ENCODE measurements at regions of chr1 and their contacts with region 1.

Region 1: DNA sequence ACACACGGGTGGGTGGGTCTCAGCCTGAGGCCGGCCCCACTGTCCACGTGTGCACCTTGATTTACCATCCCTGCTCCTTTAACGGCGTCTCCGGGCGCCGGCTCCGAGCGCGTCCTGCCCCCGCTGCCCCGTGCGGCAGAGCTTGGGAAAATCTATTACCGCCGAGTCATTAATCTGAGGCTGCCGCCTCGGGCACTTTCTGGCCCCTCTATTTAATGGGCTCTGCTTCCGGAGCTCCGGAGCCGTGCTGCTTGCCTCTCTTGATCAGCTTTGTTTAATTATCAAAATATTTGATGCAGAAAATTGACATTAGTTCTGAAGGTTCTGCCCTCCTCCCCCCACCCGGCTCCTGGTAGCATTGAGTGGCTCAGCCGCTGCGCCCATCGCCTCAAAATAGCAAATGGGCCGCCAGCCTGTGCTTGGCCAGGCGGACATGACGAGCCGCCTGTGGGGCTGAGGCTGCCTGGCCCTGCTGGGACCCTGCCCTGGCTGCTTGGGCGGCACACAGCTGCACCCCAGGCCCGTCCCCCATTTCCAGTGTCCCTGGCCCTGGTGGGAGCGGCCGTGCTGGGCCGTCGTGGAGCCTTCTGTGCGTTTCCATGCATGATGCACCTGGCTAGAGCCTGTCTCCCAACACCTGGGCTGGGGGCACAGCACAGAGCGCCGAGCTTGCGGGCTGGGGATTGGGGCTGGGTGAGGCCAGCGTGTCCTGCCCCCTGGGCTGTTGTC is 81.6 kb upstream of the TTC34 start:
- DNase-seq: no peak
- H3K4me3 ChIP-seq: no peak overlapping the region
- H3K27ac ChIP-seq: no peak overlapping the region
- H3K4me1 ChIP-seq: no peaks in the 10 kb centered on the region
- H3K27me3 ChIP-seq: no peaks in the 10 kb centered on the region
- CTCF ChIP-seq: no peak

Region 2: GRCh38 chr1:2611621-2612344 is 271.3 kb before region 1 on chr1:
- CTCF ChIA-PET with region 1: no interaction called
- dilution Hi-C with region 1: no loop called
- in situ Hi-C with region 1: no loop called
- intact Hi-C with region 1: no loop called
- DNase-seq: no peak
- H3K4me3 ChIP-seq: no peak overlapping the region
- H3K27ac ChIP-seq: no peak overlapping the region
- H3K4me1 ChIP-seq: no peaks in the 10 kb centered on the region
- H3K27me3 ChIP-seq: peaks cover 6% of the 10 kb centered on the region
- CTCF ChIP-seq: no peak

Region 3: DNA sequence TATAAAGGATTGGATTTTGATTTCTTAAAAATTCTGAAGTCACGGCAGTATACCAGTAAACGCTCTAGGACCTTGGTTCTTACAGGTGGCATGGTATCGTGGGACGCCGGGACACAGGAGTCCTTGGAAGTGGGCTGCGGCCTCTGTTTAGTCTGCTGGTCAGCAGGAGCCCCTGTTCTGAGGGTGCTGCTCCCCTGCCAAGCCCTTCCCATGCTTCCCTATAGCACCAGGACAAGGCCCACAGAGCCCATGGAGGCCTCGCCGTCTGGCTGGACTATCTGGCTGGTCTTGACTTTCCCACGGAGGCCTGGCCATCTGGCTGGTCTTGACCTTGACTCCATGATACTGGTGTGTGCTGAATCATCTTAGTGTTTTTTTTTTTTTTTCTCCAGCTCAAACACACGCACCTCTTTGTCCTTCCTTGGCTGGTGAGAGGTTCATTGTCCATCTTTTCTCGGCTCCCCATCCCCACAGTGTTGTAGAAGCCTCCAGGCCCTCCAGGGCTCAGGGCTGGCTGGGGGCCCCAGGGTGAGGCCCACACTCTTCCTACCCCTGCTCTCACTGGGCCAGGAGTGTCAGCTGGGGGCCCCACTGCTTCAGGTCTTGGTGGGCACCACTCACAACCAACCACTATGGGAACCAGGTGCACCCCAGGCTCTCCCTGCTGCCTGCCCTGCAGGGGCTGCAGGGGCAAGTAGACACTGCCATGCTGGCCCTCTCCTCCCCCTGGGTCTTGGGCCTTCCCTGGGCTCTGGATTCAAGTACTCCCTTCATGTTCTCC is 65.2 kb before region 1 on chr1:
- CTCF ChIA-PET with region 1: no interaction called
- dilution Hi-C with region 1: loop called (anchors 5 kb)
- in situ Hi-C with region 1: no loop called
- intact Hi-C with region 1: no loop called
- DNase-seq: no peak
- H3K4me3 ChIP-seq: no peak overlapping the region
- H3K27ac ChIP-seq: no peak overlapping the region
- H3K4me1 ChIP-seq: no peaks in the 10 kb centered on the region
- H3K27me3 ChIP-seq: no peaks in the 10 kb centered on the region
- CTCF ChIP-seq: no peak

Region 4: DNA sequence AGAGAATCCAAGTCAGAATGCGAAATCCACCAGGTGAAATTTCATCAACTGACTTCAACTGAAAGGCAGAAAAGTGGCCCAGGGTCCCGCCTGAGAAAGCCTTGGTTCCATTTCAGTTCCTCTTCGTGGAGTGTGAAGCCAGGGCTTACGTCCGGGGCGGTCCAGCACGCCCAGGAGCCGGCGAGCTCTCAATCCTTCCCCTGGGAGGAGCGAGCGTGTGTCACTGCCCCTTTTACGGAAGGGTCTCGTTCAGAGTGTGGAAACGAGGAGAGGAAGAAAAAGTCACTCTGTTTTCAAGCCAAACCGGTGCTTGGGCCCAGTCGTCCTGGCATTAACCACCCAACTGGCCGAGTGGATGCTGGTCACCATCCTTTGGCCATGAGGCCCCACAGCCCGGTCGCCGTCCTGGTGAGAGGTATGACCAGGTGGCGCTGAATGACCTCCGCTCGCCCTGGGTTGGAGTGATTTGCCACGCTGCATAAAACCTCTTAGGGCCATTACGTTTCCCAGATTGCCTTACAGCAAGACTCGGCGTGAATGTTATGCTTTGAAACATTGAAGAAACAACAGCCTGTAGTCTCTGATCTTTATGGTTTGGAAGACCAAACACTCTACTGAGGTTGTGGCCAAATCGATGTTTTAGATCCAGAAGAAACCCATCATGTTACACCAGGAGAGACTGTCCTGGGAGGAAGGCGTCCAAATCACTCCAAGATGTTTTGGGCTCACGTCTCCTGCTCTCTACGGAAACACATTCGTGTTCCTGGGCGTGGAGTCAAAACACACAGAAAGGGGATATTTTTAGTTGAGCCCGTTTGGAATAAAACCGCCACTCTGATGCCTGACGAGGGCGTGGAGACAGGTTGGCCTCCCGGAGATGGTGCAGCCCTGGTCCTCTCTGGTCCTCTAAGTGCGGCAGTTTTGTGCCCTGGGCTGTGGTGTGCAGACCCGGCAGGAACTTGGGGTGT is 44.5 kb after region 1 on chr1:
- CTCF ChIA-PET with region 1: no interaction called
- dilution Hi-C with region 1: loop called (anchors 5 kb)
- in situ Hi-C with region 1: no loop called
- intact Hi-C with region 1: no loop called
- DNase-seq: no peak
- H3K4me3 ChIP-seq: no peak overlapping the region
- H3K27ac ChIP-seq: no peak overlapping the region
- H3K4me1 ChIP-seq: no peaks in the 10 kb centered on the region
- H3K27me3 ChIP-seq: no peaks in the 10 kb centered on the region
- CTCF ChIP-seq: no peak

Region 5: GRCh38 chr1:2943686-2944260 is 60.6 kb after region 1 on chr1:
- CTCF ChIA-PET with region 1: no interaction called
- dilution Hi-C with region 1: no loop called
- in situ Hi-C with region 1: no loop called
- intact Hi-C with region 1: no loop called
- DNase-seq: no peak
- H3K4me3 ChIP-seq: no peak overlapping the region
- H3K27ac ChIP-seq: no peak overlapping the region
- H3K4me1 ChIP-seq: no peaks in the 10 kb centered on the region
- H3K27me3 ChIP-seq: no peaks in the 10 kb centered on the region
- CTCF ChIP-seq: no peak

Region 6: GRCh38 chr1:3069491-3070303 is 186.6 kb after region 1 on chr1:
- CTCF ChIA-PET with region 1: no interaction called
- dilution Hi-C with region 1: loop called (anchors 5 kb)
- in situ Hi-C with region 1: no loop called
- intact Hi-C with region 1: no loop called
- DNase-seq: peak; percentile 11
- H3K4me3 ChIP-seq: peak overlapping the region in 2 of 3 experiments; percentile 41 to 51
- H3K27ac ChIP-seq: no peak overlapping the region
- H3K4me1 ChIP-seq: peaks cover 2% of the 10 kb centered on the region
- H3K27me3 ChIP-seq: peaks cover 36% of the 10 kb centered on the region
- CTCF ChIP-seq: no peak

Region 7: DNA sequence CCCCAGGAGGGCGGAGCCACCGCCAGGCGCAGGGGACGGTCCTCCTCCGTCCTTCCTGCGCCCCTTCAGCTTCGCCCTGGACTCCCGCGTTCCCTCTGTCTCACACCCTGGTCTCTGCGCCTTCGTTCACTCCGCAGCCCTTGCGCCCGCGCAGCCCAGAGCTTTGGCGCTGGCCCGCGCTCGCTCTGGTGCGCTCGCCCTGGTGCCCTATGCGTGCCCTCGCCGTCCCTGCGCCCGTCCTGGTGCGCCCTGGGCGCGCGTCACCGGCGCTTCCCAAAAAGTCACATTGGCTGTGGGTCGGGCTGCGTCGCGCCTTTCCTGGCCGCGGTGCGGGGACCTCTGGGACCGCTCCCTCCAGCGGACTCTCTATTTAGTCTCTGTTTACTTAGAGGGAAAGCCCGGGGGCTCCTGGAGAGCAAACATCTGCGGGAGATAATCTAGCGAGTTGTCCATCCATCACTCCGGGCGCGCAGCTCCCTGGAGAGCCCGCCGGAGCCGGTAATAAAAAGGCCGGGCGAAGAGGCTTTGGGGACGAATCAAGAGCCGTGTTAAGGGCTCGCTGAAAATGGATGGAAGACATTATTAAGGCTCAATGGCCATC is 364.5 kb after region 1 on chr1:
- CTCF ChIA-PET with region 1: no interaction called
- dilution Hi-C with region 1: loop called (anchors 10 kb)
- in situ Hi-C with region 1: no loop called
- intact Hi-C with region 1: no loop called
- DNase-seq: peak; percentile 2
- H3K4me3 ChIP-seq: no peak overlapping the region
- H3K27ac ChIP-seq: no peak overlapping the region
- H3K4me1 ChIP-seq: no peaks in the 10 kb centered on the region
- H3K27me3 ChIP-seq: peaks cover 2% of the 10 kb centered on the region
- CTCF ChIP-seq: no peak

Region 8: GRCh38 chr1:3403388-3404231 is 520.5 kb after region 1 on chr1:
- CTCF ChIA-PET with region 1: no interaction called
- dilution Hi-C with region 1: loop called (anchors 10 kb)
- in situ Hi-C with region 1: no loop called
- intact Hi-C with region 1: no loop called
- DNase-seq: no peak
- H3K4me3 ChIP-seq: no peak overlapping the region
- H3K27ac ChIP-seq: no peak overlapping the region
- H3K4me1 ChIP-seq: peaks cover 2% of the 10 kb centered on the region
- H3K27me3 ChIP-seq: no peaks in the 10 kb centered on the region
- CTCF ChIP-seq: no peak

Measured in mammary epithelial cell (primary cell).